ENCODE measurements at regions of chr17 and their contacts with region 1.

Region 1: DNA sequence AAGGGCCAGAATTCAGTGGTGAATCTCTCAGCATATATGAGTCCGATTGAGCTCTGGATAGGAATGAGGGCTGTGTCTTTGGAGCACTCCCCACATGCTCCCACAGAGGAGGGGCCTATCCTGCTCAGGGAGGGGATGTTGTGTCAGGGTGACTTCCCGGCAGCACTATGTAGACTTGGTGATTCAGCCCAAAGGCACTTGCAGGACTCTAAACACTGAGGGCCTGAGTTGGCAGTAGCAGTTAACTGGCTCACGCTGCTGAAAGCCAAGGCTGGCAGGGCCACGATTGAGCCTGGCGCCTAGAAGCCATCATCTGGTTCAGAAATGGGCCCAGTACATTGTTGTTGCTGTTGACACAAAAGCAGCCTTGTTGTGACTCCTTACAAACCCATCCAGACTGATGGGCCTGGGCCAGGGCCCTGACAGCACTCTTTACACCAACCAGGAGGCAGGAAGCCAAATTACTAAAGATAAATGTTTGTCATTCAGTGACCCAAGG is 31.9 kb downstream of the NMT1 start:
- DNase-seq: peak; percentile 77 to 98 (median 92)

Region 2: DNA sequence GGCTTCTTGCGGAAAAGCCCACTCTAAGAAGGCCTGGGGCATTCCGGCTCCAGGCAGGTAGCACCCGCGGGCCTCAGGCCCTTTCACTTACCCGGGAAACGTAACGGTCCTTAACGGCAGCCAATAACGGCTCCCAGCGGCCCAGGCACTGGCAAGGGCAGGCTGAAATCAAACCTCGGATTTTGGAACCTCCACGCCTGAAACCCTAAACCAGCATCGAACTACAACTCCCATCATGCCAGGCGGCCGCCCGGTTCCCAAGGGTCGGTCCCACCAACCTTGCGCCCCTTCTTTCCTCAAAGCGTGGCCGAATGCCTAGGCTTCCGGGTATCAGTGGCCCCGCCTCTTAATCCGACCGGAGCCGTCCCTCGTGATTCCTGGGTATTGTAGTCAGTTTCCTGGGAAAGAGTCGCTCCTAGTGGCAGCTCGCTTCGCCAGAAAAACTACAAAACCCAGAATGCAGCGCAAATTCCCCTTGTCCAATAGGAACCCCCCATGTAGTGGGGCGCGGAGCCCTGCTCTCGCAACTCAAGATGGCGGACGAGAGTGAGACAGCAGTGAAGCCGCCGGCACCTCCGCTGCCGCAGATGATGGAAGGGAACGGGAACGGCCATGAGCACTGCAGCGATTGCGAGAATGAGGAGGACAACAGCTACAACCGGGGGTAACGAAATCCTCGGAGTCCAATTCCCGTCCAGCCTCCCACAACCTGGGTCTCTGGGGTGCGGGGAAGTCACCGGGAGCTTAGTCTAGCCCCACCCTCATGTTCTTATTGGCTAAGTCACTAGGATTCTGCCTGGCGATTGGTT is 32.0 kb before region 1 on chr17 and contains the start of gene NMT1:
- intact Hi-C with region 1: loop called (anchors 5 kb)
- DNase-seq: peak; percentile 94 to 100 (median 99)

Measured in head of caudate nucleus (tissue), 42 donors.